ENCODE measurements at regions of chr10 and their contacts with region 1.

Region 1: GRCh38 chr10:110679486-110680272 is 35.5 kb downstream of the RBM20 start:
- DNase-seq: peak in 1 of 2 donors; percentile 44
- H3K4me3 ChIP-seq: no peak overlapping the region
- H3K27ac ChIP-seq: no peak overlapping the region
- H3K4me1 ChIP-seq: peaks cover 0 to 6% (median 1%) of the 10 kb centered on the region in 4 donors
- H3K27me3 ChIP-seq: peaks cover 0 to 15% (median 0%) of the 10 kb centered on the region in 3 donors
- CTCF ChIP-seq: no peak
- EP300 ChIP-seq: no peak
- POLR2A ChIP-seq: no peak

Region 2: DNA sequence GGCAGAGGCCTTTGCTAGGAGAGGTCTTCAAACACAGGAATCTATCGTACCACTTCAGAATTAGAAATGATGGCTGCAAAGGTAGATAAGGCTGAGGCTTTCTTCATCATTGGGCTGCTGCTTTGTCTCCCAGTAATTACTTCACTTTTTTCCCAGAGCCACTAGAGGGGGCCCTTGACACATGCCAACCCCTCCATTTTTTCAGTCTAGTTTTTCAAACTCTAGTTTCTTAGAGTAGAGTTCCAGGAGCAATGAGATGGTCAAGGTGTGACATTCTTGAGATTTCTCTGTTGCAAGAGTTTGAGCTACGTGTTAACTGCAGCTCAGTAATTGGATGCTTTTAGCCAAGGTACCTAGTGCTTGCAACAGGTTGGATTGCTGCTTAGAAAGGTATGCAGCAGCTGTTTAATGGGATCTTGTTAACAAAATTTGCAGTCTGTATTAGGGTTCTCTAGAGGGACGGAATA is 69.3 kb before region 1 on chr10:
- intact Hi-C with region 1: loop called (anchors 5 kb)
- DNase-seq: peak in 1 of 2 donors; percentile 85
- H3K4me3 ChIP-seq: no peak overlapping the region
- H3K27ac ChIP-seq: no peak overlapping the region
- H3K4me1 ChIP-seq: peaks cover 0 to 9% (median 0%) of the 10 kb centered on the region in 4 donors
- H3K27me3 ChIP-seq: no peaks in the 10 kb centered on the region
- CTCF ChIP-seq: peak in 5 of 7 experiments; percentile 42 to 78 (median 55)
- EP300 ChIP-seq: no peak
- POLR2A ChIP-seq: no peak

Measured in stomach (tissue), 19 donors.